ENCODE measurements at regions of chr19 and their contacts with region 1.

Region 1: DNA sequence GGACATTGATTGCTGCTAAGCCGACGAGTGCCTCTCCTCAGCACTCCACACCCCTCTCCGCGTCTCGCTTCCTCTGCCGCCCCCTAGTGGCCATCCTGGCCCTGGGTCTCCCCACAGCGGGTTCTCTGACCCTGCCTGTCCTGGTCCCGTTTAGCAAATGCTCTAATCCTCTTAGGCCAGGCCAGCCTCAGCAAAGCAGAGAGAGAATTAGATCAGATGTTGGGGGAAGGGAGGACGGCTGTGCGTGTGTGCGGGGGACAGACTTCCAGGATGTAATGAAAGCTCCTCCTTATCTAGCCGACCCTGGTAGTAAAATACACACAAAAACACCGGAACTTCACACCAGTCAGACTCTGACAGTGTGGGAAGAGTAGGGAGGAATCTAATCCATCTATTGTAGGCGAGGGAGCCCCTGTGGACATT is 4.5 kb downstream of the TPRX2 start:
- DNase-seq: peak; percentile 89 to 93 (median 90)
- ATAC-seq: peak; percentile 100
- H3K4me3 ChIP-seq: no peak overlapping the region
- H3K27ac ChIP-seq: no peak overlapping the region
- H3K4me1 ChIP-seq: peaks cover 0 to 6% of the 10 kb centered on the region in 2 experiments; a peak in 3 of 5 replicates
- H3K27me3 ChIP-seq: no peaks in the 10 kb centered on the region; a peak in 1 of 5 replicates
- CTCF ChIP-seq: peak; percentile 94 to 99 (median 98)
- EP300 ChIP-seq: no peak; the same call in 1 of the 2 replicates
- POLR2A ChIP-seq: no peak
- RAD21 ChIP-seq: peak; percentile 78 to 90

Region 2: DNA sequence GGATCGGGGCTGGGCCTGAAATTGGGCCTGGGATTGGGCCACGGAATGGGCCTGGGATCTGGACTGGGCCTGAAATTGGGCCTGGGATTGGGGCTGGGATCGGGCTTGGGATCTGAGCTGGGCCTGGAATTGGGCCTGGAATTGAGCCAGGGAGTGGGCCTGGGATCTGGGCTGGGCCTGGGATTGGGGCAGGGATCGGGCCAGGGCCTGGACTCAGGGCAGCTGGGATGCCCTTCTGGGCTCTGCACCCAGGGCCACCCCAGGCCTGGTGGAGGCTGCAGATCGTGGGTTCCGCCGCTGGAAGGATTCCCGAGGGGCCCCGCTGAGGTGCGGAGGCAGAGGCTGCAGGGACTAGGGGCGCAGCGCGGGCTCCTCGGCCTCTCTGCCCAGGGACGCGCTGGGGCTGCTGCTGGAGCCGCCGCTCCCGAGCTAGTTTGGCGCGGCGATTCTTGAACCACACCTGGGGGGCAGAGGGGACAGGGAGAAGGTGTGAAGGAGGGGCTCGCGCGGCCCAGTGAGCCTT is 60.9 kb before region 1 on chr19:
- CTCF ChIA-PET with region 1: no interaction called
- POLR2A ChIA-PET with region 1: no interaction called
- in situ Hi-C with region 1: loop called (anchors 5 kb)
- intact Hi-C with region 1: no loop called
- DNase-seq: no peak
- ATAC-seq: no peak
- H3K4me3 ChIP-seq: no peak overlapping the region
- H3K27ac ChIP-seq: no peak overlapping the region
- H3K4me1 ChIP-seq: no peaks in the 10 kb centered on the region; a peak in 1 of 5 replicates
- H3K27me3 ChIP-seq: peaks cover 20 to 33% of the 10 kb centered on the region in 2 experiments
- CTCF ChIP-seq: no peak
- EP300 ChIP-seq: no peak
- POLR2A ChIP-seq: no peak
- RAD21 ChIP-seq: no peak

Region 3: DNA sequence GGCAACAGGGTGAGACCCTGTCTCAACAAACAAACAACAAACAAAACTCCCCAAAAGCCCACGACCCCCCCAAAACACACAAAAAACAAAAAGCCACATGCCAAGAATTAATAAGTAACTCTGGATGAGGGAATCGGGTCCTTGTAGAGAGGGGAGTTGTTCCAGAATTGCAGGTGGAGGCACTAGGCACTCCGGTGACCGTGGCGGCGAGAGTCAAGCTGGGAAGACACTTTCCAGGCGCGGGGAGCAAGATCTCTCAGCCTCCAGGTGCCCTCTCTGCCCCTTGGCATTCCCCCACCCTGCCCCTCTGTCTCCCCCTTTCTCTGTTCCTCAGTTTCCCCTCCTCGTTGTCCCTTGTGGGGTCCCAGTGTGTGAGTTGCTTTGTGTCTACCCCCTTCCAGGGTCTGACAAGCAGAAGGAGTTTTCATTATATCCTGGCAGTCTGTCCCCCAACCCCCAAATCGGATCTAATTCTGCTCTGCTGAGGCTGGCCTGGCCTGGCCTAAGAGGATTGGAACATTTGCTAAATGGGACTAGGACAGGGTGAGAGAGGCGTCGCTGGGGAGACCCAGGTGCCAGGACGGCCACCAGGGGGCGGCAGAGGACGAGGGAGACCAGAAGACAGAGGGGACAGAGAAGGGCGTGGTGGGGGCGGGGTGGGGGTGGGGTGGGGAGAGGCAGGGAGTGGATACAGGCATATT is 50.1 kb before region 1 on chr19:
- CTCF ChIA-PET with region 1: interaction called, 15 read pairs
- POLR2A ChIA-PET with region 1: no interaction called
- in situ Hi-C with region 1: no loop called
- intact Hi-C with region 1: loop called (anchors 1 kb)
- DNase-seq: peak; percentile 88 to 96 (median 92)
- ATAC-seq: peak; percentile 100
- H3K4me3 ChIP-seq: no peak overlapping the region
- H3K27ac ChIP-seq: no peak overlapping the region
- H3K4me1 ChIP-seq: peaks cover 0 to 4% of the 10 kb centered on the region in 2 experiments; a peak in 1 of 5 replicates
- H3K27me3 ChIP-seq: peaks cover 0 to 23% of the 10 kb centered on the region in 2 experiments; a peak in 2 of 5 replicates
- CTCF ChIP-seq: peak; percentile 68 to 85 (median 79)
- EP300 ChIP-seq: no peak
- POLR2A ChIP-seq: no peak
- RAD21 ChIP-seq: peak in 1 of 2 experiments; percentile 51; a peak in 2 of 4 replicates

Region 4: GRCh38 chr19:47891923-47892666 is 28.6 kb after region 1 on chr19:
- CTCF ChIA-PET with region 1: no interaction called
- POLR2A ChIA-PET with region 1: interaction called, 6 read pairs
- in situ Hi-C with region 1: no loop called
- intact Hi-C with region 1: loop called (anchors 2 kb)
- DNase-seq: peak; percentile 78 to 92 (median 81)
- ATAC-seq: peak; percentile 98
- H3K4me3 ChIP-seq: no peak overlapping the region
- H3K27ac ChIP-seq: peak overlapping the region; percentile 82
- H3K4me1 ChIP-seq: peaks cover 12 to 18% of the 10 kb centered on the region in 2 experiments
- H3K27me3 ChIP-seq: no peaks in the 10 kb centered on the region; a peak in 1 of 5 replicates
- CTCF ChIP-seq: no peak
- EP300 ChIP-seq: peak; percentile 99
- POLR2A ChIP-seq: peak; percentile 83
- RAD21 ChIP-seq: no peak